CD8-positive, alpha-beta T cell (primary cell): ENCODE measurements at regions of chr10 and their contacts with region 1.

Region 1: DNA sequence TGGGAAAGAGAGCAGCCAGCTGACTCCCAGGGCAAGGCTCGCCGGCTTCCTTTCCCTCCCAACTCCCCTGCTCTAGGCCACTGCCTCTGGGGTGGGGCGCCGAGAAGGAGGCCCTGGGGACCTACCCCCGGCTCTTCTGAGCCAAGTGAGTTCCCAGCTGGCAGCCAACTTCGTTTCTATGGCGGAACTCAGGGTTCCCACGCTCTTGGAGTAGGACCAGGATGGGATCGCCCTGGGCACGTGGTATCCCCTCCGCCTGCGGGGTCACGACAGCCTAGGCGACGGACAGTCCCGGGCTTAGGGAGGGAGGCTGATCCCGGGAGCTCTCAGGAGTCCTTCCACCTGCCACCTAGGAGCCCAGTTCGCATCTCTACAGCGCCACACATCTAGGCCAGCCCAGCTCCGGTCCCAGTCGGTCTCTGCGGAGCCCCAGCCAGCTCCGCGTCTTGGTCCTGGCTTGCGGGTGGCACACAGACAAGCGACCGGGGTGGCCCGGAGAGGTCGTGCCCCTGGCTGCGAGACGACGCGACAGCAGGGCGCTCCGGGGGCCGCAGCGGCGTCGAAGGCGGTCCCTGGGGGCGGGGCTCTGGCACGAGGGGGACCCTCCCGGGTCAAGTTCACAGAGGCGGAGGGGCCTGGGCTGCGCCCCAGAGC is 20.5 kb upstream of the GATA3 start:
- DNase-seq: peak in 3 of 9 experiments; percentile 9 to 34 (median 29)
- ATAC-seq: peak; percentile 44
- H3K4me3 ChIP-seq: no peak overlapping the region
- H3K4me3 Mint-ChIP-seq: peak overlapping the region; percentile 15
- H3K27ac ChIP-seq: no peak overlapping the region
- H3K27ac Mint-ChIP-seq: no peak overlapping the region
- H3K4me1 ChIP-seq: peaks cover 23% of the 10 kb centered on the region
- H3K4me1 Mint-ChIP-seq: peaks cover 20% of the 10 kb centered on the region
- H3K27me3 ChIP-seq: peaks cover 48 to 60% of the 10 kb centered on the region in 2 experiments
- H3K27me3 Mint-ChIP-seq: peaks cover 55% of the 10 kb centered on the region
- CTCF ChIP-seq: no peak

Region 2: DNA sequence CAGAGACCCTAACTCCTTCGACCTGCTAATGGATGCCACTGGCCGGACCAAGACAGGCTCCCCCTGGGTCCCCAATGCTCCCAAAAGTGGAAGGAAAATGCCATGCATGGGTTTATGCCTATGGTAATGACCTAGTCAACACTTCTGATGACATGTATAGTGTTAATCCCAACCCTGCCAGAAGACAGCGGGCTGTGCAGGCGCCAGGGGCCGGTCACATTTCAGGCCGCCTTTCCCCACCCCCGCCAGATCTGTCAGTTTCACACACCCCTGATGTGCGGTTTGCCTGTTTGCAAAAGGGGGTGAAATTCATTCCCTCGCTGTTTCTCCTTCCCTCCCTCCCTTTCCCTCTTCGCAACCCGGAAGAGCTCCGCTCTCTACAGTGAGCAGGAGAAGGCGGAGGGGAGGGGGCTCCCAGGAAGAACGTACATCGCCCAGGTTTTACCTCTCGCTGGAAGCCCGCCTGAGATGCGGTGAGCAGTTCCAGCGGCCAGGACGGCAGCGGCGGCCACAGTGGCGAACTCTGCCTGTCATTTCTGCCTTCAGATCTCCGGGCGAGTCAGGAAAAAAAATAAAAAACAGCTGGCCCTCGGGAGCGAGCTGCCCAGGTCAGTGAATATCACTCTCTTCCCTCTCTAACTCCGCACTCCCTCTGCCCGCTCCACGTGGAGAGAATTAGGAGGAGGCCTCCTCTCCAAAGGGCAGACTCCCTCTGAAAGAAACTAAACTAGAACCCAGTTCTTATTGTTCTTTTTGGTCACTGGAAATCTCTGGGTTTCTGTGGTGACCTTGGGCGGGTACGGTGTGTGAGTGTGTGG is 11.2 kb after region 1 on chr10:
- CTCF ChIA-PET with region 1: interaction called, 6 read pairs
- POLR2A ChIA-PET with region 1: no interaction called
- intact Hi-C with region 1: loop called in 1 of 2 experiments (anchors 1 kb)
- DNase-seq: peak in 2 of 9 experiments; percentile 44 to 62
- ATAC-seq: no peak
- H3K4me3 ChIP-seq: no peak overlapping the region
- H3K4me3 Mint-ChIP-seq: peak overlapping the region; percentile 58
- H3K27ac ChIP-seq: no peak overlapping the region
- H3K27ac Mint-ChIP-seq: no peak overlapping the region
- H3K4me1 ChIP-seq: peaks cover 65% of the 10 kb centered on the region
- H3K4me1 Mint-ChIP-seq: peaks cover 64% of the 10 kb centered on the region
- H3K27me3 ChIP-seq: peaks cover 87% of the 10 kb centered on the region in 2 experiments
- H3K27me3 Mint-ChIP-seq: peaks cover 90% of the 10 kb centered on the region
- CTCF ChIP-seq: no peak

Region 3: DNA sequence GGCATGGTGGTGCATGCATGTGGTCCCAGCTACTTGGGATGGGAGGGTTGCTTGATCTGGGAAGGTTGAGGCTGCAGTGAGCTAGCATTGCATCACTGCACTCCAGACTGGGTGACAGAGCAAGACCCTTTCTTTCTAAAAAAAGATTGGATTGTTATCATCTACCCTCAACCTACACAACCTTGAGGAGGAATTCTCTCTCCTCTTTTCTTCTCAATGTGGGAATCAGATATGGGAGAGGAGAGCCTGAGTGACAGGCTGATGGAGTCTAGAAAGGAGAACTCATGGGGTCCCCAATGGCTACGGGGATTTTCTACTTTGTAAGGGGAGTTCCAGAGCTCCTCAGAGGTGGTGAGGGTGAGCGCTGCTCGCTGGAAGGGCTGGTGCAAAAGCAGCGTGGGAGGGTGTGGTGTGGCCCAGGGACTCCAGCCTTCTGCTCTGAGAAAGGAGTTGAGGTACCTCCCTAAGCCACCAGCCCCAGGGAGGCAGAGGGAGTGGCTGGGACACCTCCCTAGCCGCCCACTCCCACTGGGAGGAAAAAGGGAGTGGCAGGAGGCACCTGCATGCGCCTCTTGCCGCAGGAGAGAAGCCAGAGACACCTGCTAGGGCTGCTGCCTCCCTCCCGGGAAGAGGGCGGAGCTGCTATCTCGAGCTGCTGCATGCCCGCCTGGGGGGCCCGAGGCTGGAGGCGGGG is 68.9 kb after region 1 on chr10:
- CTCF ChIA-PET with region 1: no interaction called
- POLR2A ChIA-PET with region 1: no interaction called
- intact Hi-C with region 1: no loop called
- DNase-seq: peak in 3 of 9 experiments; percentile 20 to 43 (median 23)
- ATAC-seq: no peak
- H3K4me3 ChIP-seq: no peak overlapping the region
- H3K4me3 Mint-ChIP-seq: no peak overlapping the region
- H3K27ac ChIP-seq: no peak overlapping the region
- H3K27ac Mint-ChIP-seq: no peak overlapping the region
- H3K4me1 ChIP-seq: no peaks in the 10 kb centered on the region
- H3K4me1 Mint-ChIP-seq: peaks cover 3% of the 10 kb centered on the region
- H3K27me3 ChIP-seq: no peaks in the 10 kb centered on the region
- H3K27me3 Mint-ChIP-seq: no peaks in the 10 kb centered on the region
- CTCF ChIP-seq: no peak